T-cell (primary cell): ENCODE measurements at regions of chrX and their contacts with region 1.

Region 1: GRCh38 chrX:137695417-137695816 is 129.5 kb downstream of the ZIC3 start:
- DNase-seq: no peak
- ATAC-seq: no peak
- H3K4me3 ChIP-seq: no peak overlapping the region
- H3K4me3 Mint-ChIP-seq: no peak overlapping the region
- H3K27ac ChIP-seq: no peak overlapping the region
- H3K27ac Mint-ChIP-seq: no peak overlapping the region
- H3K4me1 ChIP-seq: no peaks in the 10 kb centered on the region
- H3K4me1 Mint-ChIP-seq: no peaks in the 10 kb centered on the region
- H3K27me3 ChIP-seq: no peaks in the 10 kb centered on the region
- H3K27me3 Mint-ChIP-seq: peaks cover 0 to 24% of the 10 kb centered on the region in 2 donors

Region 2: GRCh38 chrX:137749246-137749645 is 53.8 kb after region 1 on chrX:
- CTCF ChIA-PET with region 1: no interaction called
- POLR2A ChIA-PET with region 1: interaction called in 1 of 2 experiments, 10 read pairs
- DNase-seq: no peak
- ATAC-seq: no peak
- H3K4me3 ChIP-seq: no peak overlapping the region
- H3K4me3 Mint-ChIP-seq: no peak overlapping the region
- H3K27ac ChIP-seq: no peak overlapping the region
- H3K27ac Mint-ChIP-seq: no peak overlapping the region
- H3K4me1 ChIP-seq: no peaks in the 10 kb centered on the region
- H3K4me1 Mint-ChIP-seq: no peaks in the 10 kb centered on the region
- H3K27me3 ChIP-seq: no peaks in the 10 kb centered on the region
- H3K27me3 Mint-ChIP-seq: peaks cover 0 to 14% of the 10 kb centered on the region in 2 donors